GM10248 (cell line): ENCODE measurements at regions of chr6 and their contacts with region 1.

Region 1: DNA sequence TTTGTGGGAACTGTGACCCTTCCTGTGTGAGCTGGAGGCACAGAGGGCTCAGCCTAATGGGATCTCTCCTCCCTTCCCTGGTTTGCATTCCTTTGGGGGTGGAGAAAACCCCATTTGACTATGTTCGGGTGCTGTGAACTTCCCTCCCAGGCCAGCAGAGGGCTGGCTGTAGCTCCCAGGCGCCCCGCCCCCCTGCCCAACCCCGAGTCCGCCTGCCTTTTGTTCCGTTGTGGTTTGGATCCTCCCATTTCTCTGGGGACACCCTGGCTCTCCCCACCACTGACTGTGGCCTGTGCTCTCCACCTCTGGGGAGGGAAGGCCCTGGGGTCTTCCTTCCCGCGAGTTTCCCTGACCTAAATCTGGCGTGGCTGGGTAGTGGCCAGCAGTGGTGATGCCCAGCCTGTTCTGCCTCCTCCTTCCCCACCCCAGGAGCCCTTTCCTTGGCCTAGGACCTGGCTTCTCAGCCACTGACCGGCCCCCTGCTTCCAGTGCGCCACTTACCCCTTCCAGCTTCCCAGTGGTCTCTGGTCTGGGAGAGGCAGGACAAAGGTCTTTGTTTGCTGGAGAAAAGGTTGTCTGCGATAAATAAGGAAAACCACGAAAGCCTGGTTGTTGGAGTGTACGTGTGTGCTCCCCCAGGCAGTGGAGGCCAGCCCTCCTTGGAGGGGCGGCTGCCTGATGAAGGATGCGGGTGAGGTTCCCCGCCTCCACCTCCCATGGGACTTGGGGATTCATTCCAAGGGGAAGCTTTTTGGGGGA is 4.9 kb downstream of the VEGFA start:
- DNase-seq: peak; percentile 88
- CTCF ChIP-seq: peak; percentile 70

Region 2: DNA sequence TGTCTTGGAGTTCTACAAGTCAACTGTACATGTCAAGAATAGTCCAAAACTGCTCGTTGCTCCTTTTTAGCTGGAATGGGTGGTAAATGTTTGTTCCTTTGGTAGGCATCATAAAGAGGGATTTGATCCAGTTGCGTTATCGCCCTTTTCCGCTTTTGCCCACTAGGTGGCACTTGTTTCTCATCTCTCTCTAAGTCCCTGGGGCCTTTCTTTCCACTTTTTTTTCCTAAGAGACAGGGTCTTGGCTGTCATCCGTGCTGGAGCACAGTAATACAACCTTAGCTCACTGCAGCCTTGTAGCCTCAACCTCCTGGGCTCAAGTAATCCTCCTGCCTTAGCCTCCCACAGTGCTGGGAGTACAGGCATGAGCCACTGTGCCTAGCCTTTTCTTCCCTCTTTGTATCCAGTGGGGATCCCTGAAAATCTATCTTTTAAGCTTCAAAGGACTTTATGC is 166.6 kb before region 1 on chr6:
- CTCF ChIA-PET with region 1: interaction called, 12 read pairs
- POLR2A ChIA-PET with region 1: no interaction called
- DNase-seq: peak; percentile 56
- CTCF ChIP-seq: peak; percentile 52

Region 3: DNA sequence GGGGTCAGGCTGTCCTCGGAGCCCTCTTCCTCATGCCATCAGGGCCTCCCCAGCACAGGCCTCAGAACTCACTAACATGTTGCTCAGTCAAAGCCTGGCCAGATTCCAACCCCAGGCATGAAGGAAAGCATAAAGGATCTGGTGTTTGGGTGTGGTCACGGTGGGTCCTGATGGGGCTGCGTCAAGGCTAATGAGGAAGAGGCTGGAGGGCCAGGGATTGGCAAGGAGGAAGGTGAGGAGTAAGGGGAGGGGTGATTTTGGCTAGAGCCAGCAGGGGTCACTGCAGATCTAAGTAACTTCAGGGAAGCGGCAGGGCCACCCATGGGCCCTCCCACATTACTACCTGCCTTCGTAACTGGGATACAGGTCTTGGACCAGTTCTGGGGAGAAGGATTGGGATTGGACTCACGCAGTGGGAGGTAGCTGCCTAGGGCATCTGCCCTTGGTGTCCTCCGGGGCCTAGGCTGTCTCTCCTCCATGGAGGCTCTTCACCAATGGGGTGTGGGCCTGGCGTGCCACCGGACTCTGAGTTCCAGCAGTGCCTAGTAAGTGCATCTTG is 51.1 kb before region 1 on chr6:
- CTCF ChIA-PET with region 1: interaction called, 28 read pairs
- POLR2A ChIA-PET with region 1: no interaction called
- DNase-seq: peak; percentile 82
- CTCF ChIP-seq: peak; percentile 65

Region 4: GRCh38 chr6:43786664-43787329 is 11.8 kb after region 1 on chr6:
- CTCF ChIA-PET with region 1: interaction called, 33 read pairs
- POLR2A ChIA-PET with region 1: no interaction called
- DNase-seq: no peak
- CTCF ChIP-seq: no peak

Region 5: GRCh38 chr6:44002593-44003344 is 227.8 kb after region 1 on chr6:
- CTCF ChIA-PET with region 1: interaction called, 12 read pairs
- POLR2A ChIA-PET with region 1: no interaction called
- DNase-seq: peak; percentile 81
- CTCF ChIP-seq: peak; percentile 19

Region 6: DNA sequence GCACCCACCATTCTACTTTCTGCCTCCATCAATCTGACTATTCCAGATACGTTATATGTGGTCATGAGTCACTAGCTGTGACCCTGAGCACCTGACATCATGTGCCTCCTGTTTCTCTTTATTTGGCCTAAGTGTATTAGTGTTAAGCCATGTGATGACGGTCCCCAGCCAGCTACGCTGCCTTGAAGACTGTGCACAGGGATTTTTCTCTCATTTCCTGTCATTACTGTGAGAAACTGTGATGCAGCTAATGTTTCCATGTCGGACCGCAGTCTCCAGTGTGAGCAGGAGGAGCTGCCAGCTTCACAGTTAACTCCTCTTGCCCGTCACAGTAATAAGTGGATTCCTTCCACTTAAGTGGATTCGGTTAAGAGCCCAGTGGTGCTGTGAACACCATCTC is 557.6 kb after region 1 on chr6:
- CTCF ChIA-PET with region 1: no interaction called
- POLR2A ChIA-PET with region 1: no interaction called
- DNase-seq: no peak
- CTCF ChIP-seq: no peak